ENCODE measurements at regions of chr14 and their contacts with region 1.

Region 1: DNA sequence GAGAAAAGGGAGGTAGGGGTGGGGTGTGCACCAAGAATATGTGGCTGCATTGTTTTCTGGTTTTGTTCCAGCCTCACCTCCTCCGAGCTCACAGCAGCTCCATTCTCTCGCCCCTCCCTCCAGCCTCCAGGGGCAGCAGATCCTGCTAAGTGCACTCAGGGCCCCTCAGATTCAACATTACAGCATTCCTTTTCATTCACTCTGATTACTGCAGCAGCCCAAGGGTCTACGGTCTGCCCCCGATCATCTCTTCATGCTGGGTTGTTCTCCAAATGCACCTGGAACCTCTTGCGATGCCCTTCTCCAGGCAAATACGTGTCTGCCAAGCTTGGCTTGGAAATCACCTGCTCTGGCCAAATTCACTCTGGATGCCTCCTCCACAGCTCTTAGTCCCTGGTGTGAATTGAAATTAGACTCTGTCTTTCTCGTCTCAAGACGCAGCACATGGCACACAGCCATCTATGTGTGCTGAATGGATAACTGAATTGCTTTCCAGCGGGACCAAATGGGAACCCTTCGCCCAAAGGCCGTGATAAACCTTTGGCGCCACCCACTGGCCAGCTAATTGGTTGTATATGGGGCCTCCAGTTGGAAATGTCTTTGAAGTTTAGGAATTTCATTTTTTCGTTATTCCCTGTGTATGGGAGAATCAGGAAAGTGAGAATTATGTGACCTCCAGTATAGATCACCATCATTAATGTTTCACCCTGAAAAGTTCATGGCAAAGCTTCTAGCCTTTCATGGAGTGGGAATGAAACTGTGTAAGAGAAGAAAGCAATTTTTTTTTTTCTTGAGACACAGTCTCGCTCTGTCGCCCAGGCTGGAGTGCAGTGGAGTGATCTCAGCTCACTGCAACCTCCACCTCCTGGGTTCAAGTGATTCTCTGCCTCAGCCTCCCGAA is 9.6 kb upstream of the HSP90AA1 start:
- DNase-seq: peak; percentile 70 to 76
- ATAC-seq: peak; percentile 82 to 92
- H3K4me3 ChIP-seq: no peak overlapping the region
- H3K27ac ChIP-seq: 0 out of 6 replicates have a peak overlapping the region, but pooled peaks of 1 of the 2 experiments have one; percentile 8
- H3K4me1 ChIP-seq: peaks cover 18% of the 10 kb centered on the region
- CTCF ChIP-seq: peak; percentile 87
- EP300 ChIP-seq: no peak
- POLR2A ChIP-seq: no peak
- RAD21 ChIP-seq: peak; percentile 89 to 91

Region 2: GRCh38 chr14:101707068-101707842 is 389.2 kb before region 1 on chr14:
- CTCF ChIA-PET with region 1: interaction called, 14 read pairs
- POLR2A ChIA-PET with region 1: no interaction called
- DNase-seq: peak; percentile 68 to 81
- ATAC-seq: peak; percentile 62 to 82
- H3K4me3 ChIP-seq: no peak overlapping the region
- H3K27ac ChIP-seq: peak overlapping the region; percentile 61 to 75
- H3K4me1 ChIP-seq: 0 out of 3 replicates have a peak, but pooled peaks cover 3% of the 10 kb centered on the region
- CTCF ChIP-seq: peak; percentile 91
- EP300 ChIP-seq: no peak
- POLR2A ChIP-seq: no peak
- RAD21 ChIP-seq: peak; percentile 94 to 96

Region 3: DNA sequence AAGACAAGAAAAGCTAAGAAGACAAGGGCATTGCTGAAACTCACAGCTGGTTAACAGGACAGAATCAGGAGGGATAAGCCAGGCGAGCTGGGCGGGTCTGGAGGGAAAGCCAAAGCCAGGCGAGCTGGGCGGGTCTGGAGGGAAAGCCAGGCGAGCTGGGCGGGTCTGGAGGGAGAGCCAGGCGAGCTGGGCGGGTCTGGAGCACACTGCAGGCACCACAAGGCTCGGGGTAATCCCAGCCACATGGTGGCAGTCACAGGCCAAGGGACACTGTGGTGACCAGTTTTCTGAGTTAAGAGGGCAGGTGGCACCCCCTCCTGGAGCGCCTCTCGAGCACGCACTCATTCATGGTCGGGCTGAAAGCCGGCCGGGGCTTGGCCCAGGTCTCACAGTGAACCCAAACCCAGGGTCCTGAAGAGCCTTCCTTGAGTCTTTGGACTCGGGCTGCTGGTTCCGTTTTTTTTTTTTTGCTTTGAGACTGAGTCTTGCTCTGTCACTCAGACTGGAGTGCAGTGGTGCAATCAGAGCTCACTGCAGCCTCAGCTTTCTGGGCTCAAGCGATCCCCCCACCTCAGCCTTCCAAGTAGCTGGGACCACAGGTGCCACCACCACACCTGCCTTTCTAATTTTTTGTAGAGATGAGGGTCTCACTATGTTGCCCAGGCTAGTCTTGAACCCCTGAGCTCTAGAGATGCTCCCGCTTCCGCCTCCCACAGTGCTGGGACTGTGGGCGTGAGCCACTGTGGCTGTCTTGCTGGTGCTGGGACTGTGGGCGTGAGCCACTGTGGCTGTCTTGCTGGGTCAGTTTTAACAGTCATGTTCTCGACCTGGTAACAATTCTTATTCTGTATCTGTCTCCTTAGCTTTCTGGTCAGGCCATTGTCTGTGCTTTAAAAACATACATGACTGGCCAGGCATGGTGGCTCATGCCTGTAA is 49.9 kb before region 1 on chr14:
- CTCF ChIA-PET with region 1: interaction called, 15 read pairs
- POLR2A ChIA-PET with region 1: no interaction called
- DNase-seq: peak; percentile 58 to 81
- ATAC-seq: peak; percentile 77 to 87
- H3K4me3 ChIP-seq: no peak overlapping the region
- H3K27ac ChIP-seq: no peak overlapping the region
- H3K4me1 ChIP-seq: no peaks in the 10 kb centered on the region
- CTCF ChIP-seq: peak; percentile 36
- EP300 ChIP-seq: no peak
- POLR2A ChIP-seq: no peak
- RAD21 ChIP-seq: peak; percentile 38 to 58; a peak in 4 of 5 replicates

Region 4: DNA sequence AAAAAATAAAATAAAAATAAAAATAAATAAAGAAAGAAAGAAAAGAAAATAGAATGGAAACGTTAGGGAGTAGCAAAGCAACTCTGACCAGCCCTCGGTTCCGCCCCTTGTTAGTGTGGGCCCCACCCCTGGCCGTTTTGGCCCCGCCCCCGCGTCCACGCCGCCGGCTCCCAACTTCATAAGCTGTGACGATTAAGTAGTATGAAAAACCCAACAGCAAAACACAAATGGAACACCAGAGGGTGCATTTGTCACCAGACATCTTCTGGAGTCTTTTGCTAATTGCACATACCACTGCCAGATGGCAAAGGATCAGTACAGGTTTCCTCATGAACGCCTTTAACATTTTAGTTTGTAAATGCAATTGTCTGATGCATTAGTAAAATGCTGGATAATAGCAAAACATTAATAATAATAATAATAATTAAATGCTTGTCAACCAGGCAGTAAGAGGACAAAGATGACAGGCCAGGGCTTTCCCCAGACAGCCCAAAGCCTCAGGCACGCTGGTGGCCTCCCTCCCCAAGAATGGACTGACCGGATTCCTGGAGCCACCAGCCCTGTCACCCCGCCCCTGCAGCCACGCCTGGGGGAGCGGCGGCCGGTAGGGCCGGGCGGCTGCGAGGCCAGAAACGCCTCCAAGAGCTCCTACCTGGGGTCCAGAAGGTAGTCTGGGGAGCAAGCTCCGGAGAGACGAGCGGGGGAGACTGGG is 33.2 kb before region 1 on chr14:
- CTCF ChIA-PET with region 1: interaction called, 29 read pairs
- POLR2A ChIA-PET with region 1: interaction called, 3 read pairs
- DNase-seq: peak; percentile 81 to 89
- ATAC-seq: peak; percentile 83 to 93
- H3K4me3 ChIP-seq: no peak overlapping the region
- H3K27ac ChIP-seq: no peak overlapping the region
- H3K4me1 ChIP-seq: no peaks in the 10 kb centered on the region
- CTCF ChIP-seq: peak; percentile 51
- EP300 ChIP-seq: no peak
- POLR2A ChIP-seq: no peak
- RAD21 ChIP-seq: peak; percentile 59 to 60

Region 5: GRCh38 chr14:102077382-102077709 is 19.1 kb before region 1 on chr14:
- CTCF ChIA-PET with region 1: interaction called, 37 read pairs
- POLR2A ChIA-PET with region 1: no interaction called
- DNase-seq: no peak
- ATAC-seq: peak; percentile 49 to 52; a peak in 5 of 6 replicates
- H3K4me3 ChIP-seq: no peak overlapping the region
- H3K27ac ChIP-seq: no peak overlapping the region
- H3K4me1 ChIP-seq: peaks cover 9% of the 10 kb centered on the region
- CTCF ChIP-seq: no peak
- EP300 ChIP-seq: no peak
- POLR2A ChIP-seq: no peak; the same call in 1 of the 2 replicates
- RAD21 ChIP-seq: no peak

Region 6: GRCh38 chr14:102116361-102117070 is 20.1 kb after region 1 on chr14:
- CTCF ChIA-PET with region 1: interaction called, 12 read pairs
- POLR2A ChIA-PET with region 1: no interaction called
- DNase-seq: no peak
- ATAC-seq: no peak
- H3K4me3 ChIP-seq: no peak overlapping the region
- H3K27ac ChIP-seq: no peak overlapping the region
- H3K4me1 ChIP-seq: no peaks in the 10 kb centered on the region
- CTCF ChIP-seq: no peak
- EP300 ChIP-seq: no peak
- POLR2A ChIP-seq: no peak
- RAD21 ChIP-seq: no peak

Region 7: GRCh38 chr14:102249041-102249440 is 152.6 kb after region 1 on chr14:
- CTCF ChIA-PET with region 1: no interaction called
- POLR2A ChIA-PET with region 1: no interaction called
- DNase-seq: no peak
- ATAC-seq: no peak
- H3K4me3 ChIP-seq: no peak overlapping the region
- H3K27ac ChIP-seq: no peak overlapping the region
- H3K4me1 ChIP-seq: no peaks in the 10 kb centered on the region
- CTCF ChIP-seq: no peak
- EP300 ChIP-seq: no peak
- POLR2A ChIP-seq: no peak
- RAD21 ChIP-seq: no peak

Measured in A549 (cell line).